Caco-2 (cell line): ENCODE measurements at regions of chr15 and their contacts with region 1.

Region 1: DNA sequence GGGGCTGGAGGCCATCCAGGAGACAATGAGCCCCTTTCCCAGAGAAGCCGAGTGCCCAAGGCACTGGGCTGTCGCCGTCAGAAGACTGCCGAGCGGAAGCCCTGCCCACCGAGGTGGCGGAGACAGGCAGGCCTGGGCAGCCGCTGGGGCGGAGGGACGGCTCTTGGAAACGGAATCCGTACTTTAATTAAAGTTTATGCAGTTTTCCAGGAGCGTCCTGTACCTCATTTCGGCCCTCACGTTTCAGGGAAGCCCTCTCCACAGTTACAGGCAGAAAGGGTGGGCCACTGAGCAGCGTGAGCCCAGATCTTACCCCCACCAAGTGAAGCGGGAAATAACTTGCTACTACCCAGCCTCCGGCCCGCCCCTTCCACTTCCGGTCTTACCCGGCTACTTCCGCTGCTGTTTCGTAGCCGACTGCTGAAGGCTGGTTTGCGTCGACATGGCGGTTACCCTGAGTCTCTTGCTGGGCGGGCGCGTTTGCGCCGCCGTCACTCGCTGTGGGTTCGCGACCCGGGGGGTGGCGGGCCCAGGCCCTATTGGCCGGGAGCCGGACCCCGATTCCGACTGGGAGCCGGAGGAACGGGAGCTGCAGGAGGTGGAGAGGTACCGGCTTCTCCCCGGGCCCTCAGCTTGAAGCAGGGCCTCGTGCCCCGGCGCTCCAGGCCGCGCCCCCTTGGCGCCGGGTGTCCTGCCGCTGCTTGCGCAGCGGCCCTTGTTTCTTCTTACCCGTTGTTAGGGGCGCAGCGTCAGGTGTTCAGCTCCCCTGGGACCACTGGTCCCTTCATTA is at the start of gene NGRN:
- DNase-seq: peak; percentile 87 to 89
- H3K4me3 ChIP-seq: peak within 1 kb of the TSS; percentile 64
- H3K4me3 Mint-ChIP-seq: peak within 1 kb of the TSS; percentile 95
- H3K27ac Mint-ChIP-seq: peak within 1 kb of the TSS; percentile 97
- H3K4me1 ChIP-seq: peaks cover 11% of the 10 kb centered on the region; the same call in 1 of the 2 replicates
- H3K4me1 Mint-ChIP-seq: peaks cover 22% of the 10 kb centered on the region
- H3K27me3 ChIP-seq: no peaks in the 10 kb centered on the region
- H3K27me3 Mint-ChIP-seq: no peaks in the 10 kb centered on the region
- CTCF ChIP-seq: no peak
- total RNA-seq, gene NGRN: 93.6 and 101 TPM in 2 replicates

Region 2: GRCh38 chr15:90149609-90150340 is 115.7 kb before region 1 on chr15:
- CTCF ChIA-PET with region 1: interaction called, 12 read pairs
- POLR2A ChIA-PET with region 1: no interaction called
- intact Hi-C with region 1: no loop called
- DNase-seq: no peak
- H3K4me3 ChIP-seq: no peak overlapping the region
- H3K4me3 Mint-ChIP-seq: no peak overlapping the region
- H3K27ac Mint-ChIP-seq: no peak overlapping the region
- H3K4me1 ChIP-seq: peaks cover 15% of the 10 kb centered on the region
- H3K4me1 Mint-ChIP-seq: peaks cover 18% of the 10 kb centered on the region
- H3K27me3 ChIP-seq: no peaks in the 10 kb centered on the region
- H3K27me3 Mint-ChIP-seq: no peaks in the 10 kb centered on the region
- CTCF ChIP-seq: no peak